ENCODE measurements at regions of chr10 and their contacts with region 1.

Region 1: GRCh38 chr10:110497438-110498086 is at the start of gene DUSP5:
- DNase-seq: peak; percentile 91 to 99 (median 96)
- ATAC-seq: peak; percentile 96
- H3K4me3 ChIP-seq: peak within 1 kb of the TSS; percentile 77
- H3K4me3 Mint-ChIP-seq: peak within 1 kb of the TSS; percentile 89 to 97 (median 92)
- H3K27ac ChIP-seq: peak within 1 kb of the TSS; percentile 71
- H3K27ac Mint-ChIP-seq: peak within 1 kb of the TSS; percentile 83 to 94 (median 91)
- H3K4me1 ChIP-seq: peaks cover 32 to 43% of the 10 kb centered on the region in 2 donors
- H3K4me1 Mint-ChIP-seq: peaks cover 43 to 57% (median 50%) of the 10 kb centered on the region in 7 donors
- H3K27me3 ChIP-seq: no peaks in the 10 kb centered on the region
- H3K27me3 Mint-ChIP-seq: peaks cover 0 to 3% (median 0%) of the 10 kb centered on the region in 5 donors
- total RNA-seq, gene DUSP5: 0.38 to 57.2 (median 35.7) TPM

Region 2: DNA sequence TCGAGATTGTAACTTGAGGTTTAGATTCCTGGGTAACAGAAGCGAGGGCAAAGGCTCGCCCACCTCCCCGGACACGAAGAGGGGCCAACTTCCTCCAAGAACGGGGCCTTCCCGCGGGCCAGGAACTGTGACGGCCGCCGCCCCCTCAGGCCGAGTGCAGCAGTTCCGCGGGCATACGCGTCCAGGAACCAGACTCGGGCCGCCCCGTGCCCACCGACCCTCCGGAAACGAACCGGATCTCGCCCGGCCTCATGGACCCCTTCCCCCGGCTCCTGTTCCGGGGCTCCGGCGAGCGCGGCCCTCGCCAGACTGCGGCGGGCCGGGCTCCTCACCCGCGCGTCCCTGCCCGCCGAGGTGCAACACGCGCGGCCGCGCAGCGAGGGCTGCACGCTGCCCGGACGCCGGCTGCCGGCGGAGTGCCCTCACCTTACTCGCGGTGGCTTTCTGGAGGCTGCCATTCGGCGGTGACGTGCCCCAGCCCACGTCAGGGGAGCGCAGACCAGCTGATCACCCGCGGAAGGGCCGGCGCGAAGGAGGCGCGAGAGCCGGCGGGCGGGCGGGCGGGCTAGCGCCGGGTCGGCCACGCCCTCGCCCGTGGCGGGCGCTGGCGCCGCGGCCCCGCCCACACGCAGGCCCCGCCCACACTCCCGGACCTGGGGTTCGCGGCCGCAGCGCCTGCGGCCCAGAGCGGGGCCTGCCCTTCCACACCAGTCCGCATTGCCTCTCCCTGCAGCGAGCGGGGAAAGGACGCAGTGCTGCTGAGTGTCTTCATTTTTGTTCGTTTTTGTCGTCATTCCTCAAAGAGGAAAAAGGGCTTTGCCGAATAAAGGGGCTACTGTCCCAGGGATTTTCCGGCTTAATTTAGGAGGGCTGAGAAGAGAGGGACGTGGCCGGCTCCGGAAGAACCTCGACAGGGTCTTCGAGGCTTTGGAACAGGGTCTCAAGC is 574.3 kb before region 1 on chr10 and contains the start of gene XPNPEP1:
- CTCF ChIA-PET with region 1: no interaction called
- POLR2A ChIA-PET with region 1: no interaction called
- intact Hi-C with region 1: loop called in 1 of 2 experiments (anchors 5 kb)
- DNase-seq: peak; percentile 55 to 90 (median 66)
- ATAC-seq: peak; percentile 98
- H3K4me3 ChIP-seq: peak within 1 kb of the TSS; percentile 67
- H3K4me3 Mint-ChIP-seq: peak within 1 kb of the TSS; percentile 78 to 94 (median 90)
- H3K27ac ChIP-seq: peak within 1 kb of the TSS; percentile 83
- H3K27ac Mint-ChIP-seq: peak within 1 kb of the TSS; percentile 75 to 95 (median 89)
- H3K4me1 ChIP-seq: peaks cover 30 to 39% of the 10 kb centered on the region in 2 donors
- H3K4me1 Mint-ChIP-seq: peaks cover 36 to 58% (median 54%) of the 10 kb centered on the region in 7 donors
- H3K27me3 ChIP-seq: no peaks in the 10 kb centered on the region
- H3K27me3 Mint-ChIP-seq: peaks cover 0 to 16% (median 0%) of the 10 kb centered on the region in 5 donors
- total RNA-seq, gene XPNPEP1: 44.1 to 100 (median 60.7) TPM

Region 3: DNA sequence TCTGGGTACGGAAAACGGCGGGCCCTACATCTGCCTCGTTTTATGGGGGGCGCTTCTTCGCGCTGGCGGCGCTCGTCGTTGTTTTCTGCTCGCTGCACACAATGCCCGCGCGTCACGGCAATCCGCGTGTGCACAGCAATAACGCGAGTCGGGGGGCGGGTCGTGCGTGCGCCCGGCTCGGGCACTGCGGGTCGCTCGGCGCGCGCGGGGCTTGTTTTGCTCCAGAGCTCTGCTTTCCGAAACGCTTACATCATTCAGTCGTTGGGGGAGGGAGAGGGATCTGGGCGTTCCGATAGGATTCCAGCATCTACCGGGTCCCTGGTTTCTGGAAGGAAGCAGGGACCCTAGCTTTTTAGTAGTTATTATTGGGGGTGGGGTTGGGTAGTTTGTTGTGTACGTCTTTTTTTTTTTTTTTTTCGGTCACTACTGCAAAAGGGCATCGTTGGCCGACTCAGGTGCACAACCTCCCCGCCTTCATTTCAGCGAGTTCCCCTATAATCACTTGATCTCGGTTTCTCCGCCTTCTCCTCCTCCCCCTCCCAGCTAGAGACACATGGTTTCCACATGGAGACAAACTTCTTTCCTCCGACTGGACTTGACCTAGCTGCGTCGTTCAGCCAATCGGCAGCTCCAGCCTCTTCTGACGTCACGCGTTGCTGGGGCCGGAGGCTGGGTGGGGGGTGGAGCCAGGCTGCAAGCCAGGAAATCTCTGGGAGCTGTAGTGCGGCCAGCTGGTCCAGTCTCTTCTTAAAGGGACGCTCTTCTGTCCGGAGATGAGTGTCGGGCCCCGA is 286.7 kb before region 1 on chr10:
- CTCF ChIA-PET with region 1: no interaction called
- POLR2A ChIA-PET with region 1: no interaction called
- intact Hi-C with region 1: loop called (anchors 1 to 2 kb)
- DNase-seq: peak; percentile 81 to 92 (median 89)
- ATAC-seq: peak; percentile 76
- H3K4me3 ChIP-seq: peak overlapping the region; percentile 69
- H3K4me3 Mint-ChIP-seq: peak overlapping the region; percentile 93 to 99 (median 97)
- H3K27ac ChIP-seq: peak overlapping the region; percentile 95
- H3K27ac Mint-ChIP-seq: peak overlapping the region; percentile 95 to 99 (median 98)
- H3K4me1 ChIP-seq: peaks cover 21 to 46% of the 10 kb centered on the region in 2 donors
- H3K4me1 Mint-ChIP-seq: peaks cover 34 to 64% (median 57%) of the 10 kb centered on the region in 7 donors
- H3K27me3 ChIP-seq: no peaks in the 10 kb centered on the region
- H3K27me3 Mint-ChIP-seq: peaks cover 0 to 10% (median 7%) of the 10 kb centered on the region in 5 donors

Region 4: DNA sequence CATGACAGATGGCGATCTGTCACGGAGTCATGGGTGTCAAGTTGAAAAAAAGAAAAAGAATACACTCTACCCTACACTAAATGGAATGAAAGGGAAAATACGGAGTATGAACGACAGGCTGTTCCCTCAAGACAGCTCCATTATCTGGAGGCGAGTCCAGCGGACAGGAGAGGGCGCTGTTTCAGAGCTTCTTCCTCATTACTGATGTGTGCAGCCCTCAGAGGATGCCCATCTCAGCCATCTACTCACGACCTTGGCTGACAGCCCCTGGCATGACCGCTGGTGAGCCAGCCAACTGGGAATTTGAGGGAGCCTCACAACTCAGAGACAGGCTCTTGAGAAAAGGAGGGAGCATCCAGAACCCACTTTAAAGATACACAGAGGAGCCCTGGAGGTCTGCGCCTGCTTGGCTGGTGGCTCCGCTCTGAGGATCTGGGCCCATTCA is 143.2 kb before region 1 on chr10:
- CTCF ChIA-PET with region 1: interaction called, 4 read pairs
- POLR2A ChIA-PET with region 1: interaction called, 3 read pairs
- intact Hi-C with region 1: loop called (anchors 1 kb)
- DNase-seq: peak in 8 of 9 donors; percentile 49 to 75 (median 58)
- ATAC-seq: peak; percentile 73
- H3K4me3 ChIP-seq: no peak overlapping the region
- H3K4me3 Mint-ChIP-seq: peak overlapping the region in 6 of 10 donors; percentile 17 to 48 (median 25)
- H3K27ac ChIP-seq: no peak overlapping the region
- H3K27ac Mint-ChIP-seq: peak overlapping the region in 7 of 9 donors; percentile 14 to 97 (median 53)
- H3K4me1 ChIP-seq: peaks cover 43 to 47% of the 10 kb centered on the region in 2 donors
- H3K4me1 Mint-ChIP-seq: peaks cover 33 to 57% (median 50%) of the 10 kb centered on the region in 7 donors
- H3K27me3 ChIP-seq: no peaks in the 10 kb centered on the region
- H3K27me3 Mint-ChIP-seq: no peaks in the 10 kb centered on the region

Region 5: DNA sequence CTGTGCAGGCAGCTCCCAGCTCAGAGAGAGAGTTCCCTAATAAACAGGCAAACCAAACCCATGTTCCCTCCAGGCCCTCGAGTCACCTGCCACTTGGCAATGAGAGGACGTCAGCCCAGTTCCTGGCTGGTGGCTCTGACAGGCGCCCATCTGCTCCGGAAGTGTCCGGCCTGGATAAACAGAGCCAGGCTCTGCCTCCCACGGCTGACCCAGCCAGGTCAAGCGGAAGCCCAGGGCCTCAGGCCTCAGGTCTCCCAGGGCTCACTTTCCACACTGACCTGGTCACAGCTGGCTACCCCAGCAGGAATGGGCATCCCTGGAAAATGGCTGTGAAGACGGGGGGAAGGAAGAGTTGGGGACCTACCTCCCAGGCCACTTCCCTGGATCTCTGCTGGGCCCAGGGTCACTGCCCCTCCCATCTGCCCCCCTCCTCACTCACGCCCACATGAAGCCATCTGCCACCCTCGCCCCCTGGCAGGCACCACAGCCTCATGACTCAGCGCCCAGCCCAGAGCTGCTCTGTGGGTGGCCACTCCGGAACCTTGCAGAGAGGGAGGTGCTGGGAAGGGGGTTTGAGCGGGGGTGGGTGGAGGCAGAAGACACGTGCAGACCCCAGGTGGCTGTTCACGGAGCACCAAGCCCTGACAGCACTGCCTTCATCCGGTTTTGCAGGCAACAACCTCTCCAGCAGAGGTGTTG is 37.3 kb before region 1 on chr10:
- CTCF ChIA-PET with region 1: no interaction called
- POLR2A ChIA-PET with region 1: no interaction called
- intact Hi-C with region 1: no loop called
- DNase-seq: peak in 1 of 9 donors; percentile 47
- ATAC-seq: peak; percentile 73
- H3K4me3 ChIP-seq: no peak overlapping the region
- H3K4me3 Mint-ChIP-seq: no peak overlapping the region
- H3K27ac ChIP-seq: no peak overlapping the region
- H3K27ac Mint-ChIP-seq: peak overlapping the region in 1 of 9 donors; percentile 56
- H3K4me1 ChIP-seq: peaks cover 0 to 38% of the 10 kb centered on the region in 2 donors
- H3K4me1 Mint-ChIP-seq: peaks cover 14 to 33% (median 18%) of the 10 kb centered on the region in 7 donors
- H3K27me3 ChIP-seq: no peaks in the 10 kb centered on the region
- H3K27me3 Mint-ChIP-seq: no peaks in the 10 kb centered on the region

Region 6: DNA sequence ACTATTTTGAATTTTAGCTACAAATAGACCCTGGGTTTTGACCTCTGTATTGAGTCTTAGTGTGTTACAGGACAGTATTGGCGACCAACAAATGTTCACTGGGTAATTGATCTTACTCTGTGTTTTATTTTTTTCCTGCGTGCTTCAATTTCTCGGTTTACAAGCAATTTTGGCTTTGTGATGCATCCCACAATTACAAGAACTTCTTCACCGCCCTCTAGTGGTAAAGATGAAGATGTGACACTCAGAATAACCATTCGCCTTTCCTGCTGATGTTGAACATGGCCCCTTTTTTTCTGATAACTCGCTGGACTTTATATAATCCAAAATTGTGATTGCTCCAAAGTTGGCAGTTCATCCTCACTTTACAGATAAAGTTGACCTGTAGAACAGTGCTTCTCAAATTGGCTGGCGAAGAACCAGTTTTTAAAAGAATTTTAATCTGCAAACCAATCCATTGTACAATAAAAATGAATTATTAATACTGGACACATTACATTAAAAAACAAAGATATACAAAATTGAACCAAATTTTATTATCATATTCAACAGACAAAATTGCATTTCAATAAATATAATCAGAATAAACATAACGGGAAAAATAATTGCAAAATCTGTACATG is 49.7 kb after region 1 on chr10:
- CTCF ChIA-PET with region 1: interaction called, 5 read pairs
- POLR2A ChIA-PET with region 1: interaction called, 4 read pairs
- intact Hi-C with region 1: loop called in 1 of 2 experiments (anchors 1 kb)
- DNase-seq: peak in 7 of 9 donors; percentile 40 to 75 (median 68)
- ATAC-seq: peak; percentile 85
- H3K4me3 ChIP-seq: no peak overlapping the region
- H3K4me3 Mint-ChIP-seq: peak overlapping the region in 1 of 10 donors; percentile 2
- H3K27ac ChIP-seq: no peak overlapping the region
- H3K27ac Mint-ChIP-seq: peak overlapping the region in 2 of 9 donors; percentile 3 to 6
- H3K4me1 ChIP-seq: peaks cover 0 to 5% of the 10 kb centered on the region in 2 donors
- H3K4me1 Mint-ChIP-seq: peaks cover 3 to 16% (median 5%) of the 10 kb centered on the region in 7 donors
- H3K27me3 ChIP-seq: no peaks in the 10 kb centered on the region
- H3K27me3 Mint-ChIP-seq: peaks cover 0 to 39% (median 11%) of the 10 kb centered on the region in 5 donors

Region 7: GRCh38 chr10:110871298-110872084 is 373.9 kb after region 1 on chr10 and contains the start of gene PDCD4:
- CTCF ChIA-PET with region 1: no interaction called
- POLR2A ChIA-PET with region 1: no interaction called
- intact Hi-C with region 1: loop called (anchors 5 to 10 kb)
- DNase-seq: peak; percentile 83 to 98 (median 90)
- ATAC-seq: peak; percentile 78
- H3K4me3 ChIP-seq: peak within 1 kb of the TSS; percentile 78
- H3K4me3 Mint-ChIP-seq: peak within 1 kb of the TSS; percentile 79 to 99 (median 96)
- H3K27ac ChIP-seq: peak within 1 kb of the TSS; percentile 100
- H3K27ac Mint-ChIP-seq: peak within 1 kb of the TSS; percentile 95 to 100 (median 99)
- H3K4me1 ChIP-seq: peaks cover 53 to 71% of the 10 kb centered on the region in 2 donors
- H3K4me1 Mint-ChIP-seq: peaks cover 43 to 77% (median 68%) of the 10 kb centered on the region in 7 donors
- H3K27me3 ChIP-seq: no peaks in the 10 kb centered on the region
- H3K27me3 Mint-ChIP-seq: peaks cover 0 to 2% (median 0%) of the 10 kb centered on the region in 5 donors
- total RNA-seq, gene PDCD4: 93.7 to 283 (median 223) TPM